Caco-2 (cell line): ENCODE measurements at regions of chr14 and their contacts with region 1.

Region 1: DNA sequence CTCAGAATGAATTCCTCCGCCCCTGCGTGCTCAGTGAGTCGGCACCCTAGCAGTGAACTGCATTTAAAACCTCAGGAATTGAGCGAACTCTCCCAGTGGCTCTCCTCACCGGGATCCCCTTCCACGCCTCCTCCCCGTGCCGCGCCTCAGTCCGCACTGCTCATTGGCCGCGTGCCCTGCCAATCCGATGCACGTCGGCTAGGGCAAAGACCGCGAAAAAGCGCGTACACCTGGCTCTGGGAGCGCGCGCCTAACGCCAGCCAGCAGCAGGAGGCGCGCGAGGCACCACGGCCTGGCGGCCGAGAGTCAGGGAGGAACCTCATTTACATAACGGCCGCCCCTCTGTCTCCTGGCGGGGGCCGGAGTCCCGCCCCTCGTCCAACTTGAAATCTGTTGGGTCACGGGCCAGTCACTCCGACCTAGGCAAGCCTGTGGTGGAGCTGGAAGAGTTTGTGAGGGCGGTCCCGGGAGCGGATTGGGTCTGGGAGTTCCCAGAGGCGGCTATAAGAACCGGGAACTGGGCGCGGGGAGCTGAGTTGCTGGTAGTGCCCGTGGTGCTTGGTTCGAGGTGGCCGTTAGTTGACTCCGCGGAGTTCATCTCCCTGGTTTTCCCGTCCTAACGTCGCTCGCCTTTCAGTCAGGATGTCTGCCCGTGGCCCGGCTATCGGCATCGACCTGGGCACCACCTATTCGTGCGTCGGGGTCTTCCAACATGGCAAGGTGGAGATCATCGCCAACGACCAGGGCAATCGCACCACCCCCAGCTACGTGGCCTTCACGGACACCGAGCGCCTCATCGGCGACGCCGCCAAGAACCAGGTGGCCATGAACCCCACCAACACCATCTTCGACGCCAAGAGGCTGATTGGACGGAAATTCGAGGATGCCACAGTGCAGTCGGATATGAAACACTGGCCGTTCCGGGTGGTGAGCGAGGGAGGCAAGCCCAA is at the start of gene HSPA2:
- DNase-seq: peak; percentile 98 to 99
- H3K4me3 ChIP-seq: peak within 1 kb of the TSS; percentile 49
- H3K4me3 Mint-ChIP-seq: peak within 1 kb of the TSS; percentile 71
- H3K27ac Mint-ChIP-seq: peak within 1 kb of the TSS; percentile 79
- H3K4me1 ChIP-seq: peaks cover 14% of the 10 kb centered on the region; the same call in 1 of the 2 replicates
- H3K4me1 Mint-ChIP-seq: peaks cover 16% of the 10 kb centered on the region
- H3K27me3 ChIP-seq: no peaks in the 10 kb centered on the region
- H3K27me3 Mint-ChIP-seq: no peaks in the 10 kb centered on the region
- CTCF ChIP-seq: peak; percentile 41 to 78
- total RNA-seq, gene HSPA2: 8.3 and 8.7 TPM in 2 replicates

Region 2: DNA sequence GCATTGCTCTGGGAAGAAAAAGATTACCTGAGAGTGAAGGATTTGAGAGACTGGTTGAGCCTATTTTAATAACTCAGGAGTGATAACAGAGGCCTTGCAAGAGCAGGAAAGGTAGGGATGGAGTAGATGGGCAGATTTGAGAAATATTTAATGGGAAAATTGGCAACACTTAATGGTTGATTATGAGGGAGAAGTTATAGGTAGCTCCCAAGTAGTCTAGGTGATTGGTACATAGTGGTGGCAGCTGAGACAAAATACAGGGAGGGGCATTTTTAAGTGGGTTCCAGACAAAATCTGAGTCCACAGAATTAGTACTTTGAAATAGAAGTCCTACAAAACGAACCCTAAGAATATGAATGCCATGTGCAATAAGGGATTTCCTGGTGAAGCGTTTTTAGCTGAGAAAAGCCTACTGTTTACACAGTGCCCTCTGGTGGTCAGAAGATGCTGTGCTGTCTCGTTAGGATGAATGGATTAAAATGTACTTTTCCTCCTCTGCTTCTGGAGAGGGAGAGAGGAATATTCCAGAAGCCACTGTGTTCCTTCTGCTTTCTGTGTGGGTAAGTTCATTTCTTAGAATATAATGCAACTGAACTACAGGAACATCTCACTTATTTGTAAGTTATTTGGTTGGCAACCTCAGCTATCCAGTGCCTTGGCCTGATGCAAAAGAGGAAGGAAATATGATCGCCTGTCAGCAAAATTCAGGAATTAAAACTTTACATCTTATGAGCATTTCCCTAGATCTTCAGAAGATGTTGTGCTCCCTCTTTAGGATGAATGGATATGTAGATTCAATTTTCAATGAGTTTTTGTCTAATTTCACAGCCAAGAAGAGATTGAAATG is 29.4 kb before region 1 on chr14:
- CTCF ChIA-PET with region 1: interaction called, 8 read pairs
- POLR2A ChIA-PET with region 1: no interaction called
- intact Hi-C with region 1: loop called (anchors 2 kb)
- DNase-seq: peak; percentile 53 to 71
- H3K4me3 ChIP-seq: no peak overlapping the region
- H3K4me3 Mint-ChIP-seq: peak overlapping the region; percentile 0
- H3K27ac Mint-ChIP-seq: peak overlapping the region; percentile 6
- H3K4me1 ChIP-seq: peaks cover 20% of the 10 kb centered on the region
- H3K4me1 Mint-ChIP-seq: peaks cover 28% of the 10 kb centered on the region
- H3K27me3 ChIP-seq: no peaks in the 10 kb centered on the region
- H3K27me3 Mint-ChIP-seq: no peaks in the 10 kb centered on the region
- CTCF ChIP-seq: peak; percentile 83 to 86

Region 3: GRCh38 chr14:64625475-64626269 is 85.2 kb after region 1 on chr14:
- CTCF ChIA-PET with region 1: interaction called, 7 read pairs
- POLR2A ChIA-PET with region 1: interaction called, 12 read pairs
- intact Hi-C with region 1: no loop called
- DNase-seq: peak; percentile 40 to 63
- H3K4me3 ChIP-seq: no peak overlapping the region
- H3K4me3 Mint-ChIP-seq: peak overlapping the region; percentile 50
- H3K27ac Mint-ChIP-seq: peak overlapping the region; percentile 90
- H3K4me1 ChIP-seq: peaks cover 20% of the 10 kb centered on the region
- H3K4me1 Mint-ChIP-seq: peaks cover 18% of the 10 kb centered on the region
- H3K27me3 ChIP-seq: no peaks in the 10 kb centered on the region
- H3K27me3 Mint-ChIP-seq: no peaks in the 10 kb centered on the region
- CTCF ChIP-seq: no peak

Region 4: GRCh38 chr14:64636208-64636979 is 95.9 kb after region 1 on chr14:
- CTCF ChIA-PET with region 1: interaction called, 9 read pairs
- POLR2A ChIA-PET with region 1: interaction called, 3 read pairs
- intact Hi-C with region 1: loop called (anchors 1 kb)
- DNase-seq: peak; percentile 68 to 80
- H3K4me3 ChIP-seq: no peak overlapping the region
- H3K4me3 Mint-ChIP-seq: no peak overlapping the region
- H3K27ac Mint-ChIP-seq: no peak overlapping the region
- H3K4me1 ChIP-seq: peaks cover 46% of the 10 kb centered on the region
- H3K4me1 Mint-ChIP-seq: peaks cover 26% of the 10 kb centered on the region
- H3K27me3 ChIP-seq: no peaks in the 10 kb centered on the region
- H3K27me3 Mint-ChIP-seq: no peaks in the 10 kb centered on the region
- CTCF ChIP-seq: peak; percentile 82 to 87

Region 5: GRCh38 chr14:64645220-64645892 is 104.9 kb after region 1 on chr14:
- CTCF ChIA-PET with region 1: no interaction called
- POLR2A ChIA-PET with region 1: interaction called, 4 read pairs
- intact Hi-C with region 1: loop called (anchors 2 kb)
- DNase-seq: peak; percentile 74 to 84
- H3K4me3 ChIP-seq: no peak overlapping the region
- H3K4me3 Mint-ChIP-seq: peak overlapping the region; percentile 45
- H3K27ac Mint-ChIP-seq: peak overlapping the region; percentile 99
- H3K4me1 ChIP-seq: peaks cover 78% of the 10 kb centered on the region
- H3K4me1 Mint-ChIP-seq: peaks cover 61% of the 10 kb centered on the region
- H3K27me3 ChIP-seq: no peaks in the 10 kb centered on the region
- H3K27me3 Mint-ChIP-seq: no peaks in the 10 kb centered on the region
- CTCF ChIP-seq: no peak

Region 6: DNA sequence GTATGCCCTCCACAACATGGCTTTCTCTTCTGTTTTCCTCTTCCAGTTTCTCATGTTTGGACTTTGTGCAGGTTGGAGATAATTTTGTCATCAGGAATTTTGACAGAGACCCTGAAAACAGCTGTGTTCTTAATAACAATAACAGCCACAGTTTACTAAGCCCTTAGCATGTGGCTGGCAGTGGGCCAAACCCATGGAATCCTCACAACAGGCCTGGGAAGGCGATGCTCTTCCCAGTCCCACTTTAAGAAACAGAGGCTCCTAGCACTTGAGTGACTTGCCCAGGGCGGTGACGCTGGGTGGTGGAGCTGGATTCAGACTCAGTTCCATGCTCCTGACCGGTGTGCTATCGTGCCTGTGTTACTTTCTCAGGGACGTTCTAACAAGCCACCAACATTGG is 143.6 kb after region 1 on chr14:
- CTCF ChIA-PET with region 1: no interaction called
- POLR2A ChIA-PET with region 1: no interaction called
- intact Hi-C with region 1: no loop called
- DNase-seq: no peak
- H3K4me3 ChIP-seq: no peak overlapping the region
- H3K4me3 Mint-ChIP-seq: no peak overlapping the region
- H3K27ac Mint-ChIP-seq: no peak overlapping the region
- H3K4me1 ChIP-seq: peaks cover 33% of the 10 kb centered on the region
- H3K4me1 Mint-ChIP-seq: peaks cover 22% of the 10 kb centered on the region
- H3K27me3 ChIP-seq: no peaks in the 10 kb centered on the region
- H3K27me3 Mint-ChIP-seq: no peaks in the 10 kb centered on the region
- CTCF ChIP-seq: no peak

Region 7: DNA sequence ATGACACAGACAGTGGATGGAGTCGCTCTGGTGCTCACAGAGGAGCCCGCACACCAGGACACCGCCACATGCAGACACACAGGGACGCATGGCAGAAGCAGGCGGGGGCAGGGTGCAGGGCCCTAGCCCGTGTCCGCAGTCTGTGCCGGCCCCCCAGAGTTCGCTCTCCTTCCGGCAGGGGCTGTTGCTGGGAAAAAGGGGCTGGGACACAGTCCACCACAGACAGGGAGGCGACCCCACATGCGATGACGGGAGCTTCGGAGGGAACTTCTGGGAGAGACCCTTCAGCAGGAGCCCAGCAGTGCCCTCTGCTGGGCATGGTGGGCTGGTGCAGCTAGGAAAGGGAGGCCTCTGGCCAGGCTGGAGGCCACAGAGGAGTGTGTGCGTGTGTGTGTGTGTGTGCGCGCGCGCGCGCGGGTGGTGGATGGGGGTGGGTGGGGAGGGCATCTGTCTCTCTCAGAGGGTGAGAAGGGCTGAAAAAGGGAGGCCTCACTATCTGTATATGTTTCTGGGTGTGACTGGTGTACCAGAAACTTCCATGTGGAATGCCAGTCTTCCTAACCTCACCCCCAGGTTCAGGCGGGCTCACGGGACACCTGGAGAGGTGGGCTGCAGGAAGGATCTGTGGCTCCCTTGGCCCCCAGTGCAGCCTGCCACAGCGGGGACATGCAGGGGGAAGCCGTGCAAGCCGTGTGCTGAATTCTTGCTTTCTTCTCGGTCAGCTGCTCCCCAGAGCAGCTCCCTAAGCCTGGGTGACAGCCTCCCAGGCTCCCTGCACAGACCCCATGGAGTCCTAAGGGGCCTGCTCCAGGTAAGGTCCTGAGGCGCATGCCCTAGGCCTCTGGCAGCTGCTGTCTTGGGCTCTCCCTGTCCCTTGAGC is 224.4 kb after region 1 on chr14:
- CTCF ChIA-PET with region 1: interaction called, 3 read pairs
- POLR2A ChIA-PET with region 1: no interaction called
- intact Hi-C with region 1: loop called (anchors 5 kb)
- DNase-seq: peak; percentile 76 to 86
- H3K4me3 ChIP-seq: no peak overlapping the region
- H3K4me3 Mint-ChIP-seq: peak overlapping the region; percentile 30
- H3K27ac Mint-ChIP-seq: peak overlapping the region; percentile 19
- H3K4me1 ChIP-seq: peaks cover 37% of the 10 kb centered on the region
- H3K4me1 Mint-ChIP-seq: peaks cover 40% of the 10 kb centered on the region
- H3K27me3 ChIP-seq: no peaks in the 10 kb centered on the region
- H3K27me3 Mint-ChIP-seq: no peaks in the 10 kb centered on the region
- CTCF ChIP-seq: peak; percentile 89 to 93